ENCODE measurements at regions of chr1 and their contacts with region 1.

Region 1: DNA sequence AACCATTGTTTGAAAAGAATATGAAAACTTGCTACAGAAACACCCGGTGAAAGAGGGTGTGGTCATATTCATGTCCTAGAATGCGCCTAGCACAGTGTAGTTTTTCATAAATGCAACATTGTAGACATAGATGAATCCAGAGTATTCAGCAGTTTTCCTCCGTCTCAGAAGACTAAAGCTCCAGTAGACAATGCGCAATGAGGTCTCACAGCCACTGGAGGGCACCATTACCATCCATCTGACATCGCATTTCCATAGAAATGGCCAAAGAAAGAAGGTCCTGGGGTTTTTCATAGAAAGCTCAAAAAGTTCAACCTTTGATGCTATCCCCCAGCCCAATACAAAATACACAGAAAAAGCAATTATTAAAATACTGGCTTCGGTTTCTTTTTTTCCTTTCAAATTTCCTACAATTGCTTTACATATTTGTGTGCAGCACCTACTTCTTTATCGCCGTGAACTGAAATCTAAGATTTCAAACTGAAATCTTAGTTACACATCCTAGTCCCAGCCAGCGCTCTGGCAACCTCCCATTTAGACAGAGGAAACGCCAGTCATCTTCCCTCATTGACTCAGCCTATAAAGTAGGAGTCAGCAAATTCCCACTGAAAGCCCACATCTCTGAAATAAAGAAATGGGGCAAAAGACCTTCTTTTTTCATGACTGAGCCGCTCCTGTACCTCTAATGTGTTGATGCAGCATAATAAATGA is 3.9 kb upstream of the CD58 start:
- DNase-seq: peak; percentile 16 to 61 (median 36)
- H3K4me3 ChIP-seq: no peak overlapping the region
- H3K4me3 Mint-ChIP-seq: peak overlapping the region in 1 of 7 donors; percentile 80
- H3K27ac ChIP-seq: no peak overlapping the region
- H3K27ac Mint-ChIP-seq: peak overlapping the region in 1 of 8 donors; percentile 29
- H3K4me1 ChIP-seq: peaks cover 9% of the 10 kb centered on the region
- H3K4me1 Mint-ChIP-seq: peaks cover 11 to 23% (median 21%) of the 10 kb centered on the region in 3 donors
- H3K27me3 ChIP-seq: no peaks in the 10 kb centered on the region
- H3K27me3 Mint-ChIP-seq: peaks cover 0 to 12% of the 10 kb centered on the region in 2 donors

Region 2: DNA sequence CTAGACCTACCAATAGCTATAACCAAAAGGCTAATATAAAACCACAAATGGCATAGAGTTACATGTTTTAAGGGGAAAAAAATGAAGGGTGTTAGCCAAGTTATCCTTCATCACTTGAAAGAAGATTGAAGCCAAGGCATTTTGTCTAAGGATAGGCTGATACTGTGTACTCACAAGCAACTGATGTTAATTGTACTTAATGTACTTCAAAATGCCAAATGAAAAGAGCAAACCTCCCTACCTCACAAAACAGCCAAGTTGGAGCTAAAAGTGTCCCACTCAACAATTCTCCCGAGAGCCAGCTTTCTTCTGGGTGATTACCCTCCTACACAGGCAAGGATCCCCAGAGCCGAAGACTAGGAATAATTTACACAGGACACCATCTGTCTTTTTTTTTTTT is 97.2 kb after region 1 on chr1:
- CTCF ChIA-PET with region 1: interaction called, 10 read pairs
- POLR2A ChIA-PET with region 1: no interaction called
- DNase-seq: no peak
- H3K4me3 ChIP-seq: no peak overlapping the region
- H3K4me3 Mint-ChIP-seq: no peak overlapping the region
- H3K27ac ChIP-seq: no peak overlapping the region
- H3K27ac Mint-ChIP-seq: no peak overlapping the region
- H3K4me1 ChIP-seq: peaks cover 3% of the 10 kb centered on the region
- H3K4me1 Mint-ChIP-seq: peaks cover 3 to 9% (median 4%) of the 10 kb centered on the region in 3 donors
- H3K27me3 ChIP-seq: peaks cover 3% of the 10 kb centered on the region
- H3K27me3 Mint-ChIP-seq: peaks cover 18 to 56% of the 10 kb centered on the region in 2 donors